Lower leg skin (tissue), 4 donors: ENCODE measurements at regions of chr2 and their contacts with region 1.

Region 1: GRCh38 chr2:130342533-130343275 is at the start of gene IMP4:
- DNase-seq: peak; percentile 99
- H3K4me3 ChIP-seq: peak within 1 kb of the TSS; percentile 78
- CTCF ChIP-seq: peak in 1 of 3 donors; percentile 16
- POLR2A ChIP-seq: no peak
- total RNA-seq, gene IMP4: 84.8 to 98.1 (median 97.0) TPM

Region 2: DNA sequence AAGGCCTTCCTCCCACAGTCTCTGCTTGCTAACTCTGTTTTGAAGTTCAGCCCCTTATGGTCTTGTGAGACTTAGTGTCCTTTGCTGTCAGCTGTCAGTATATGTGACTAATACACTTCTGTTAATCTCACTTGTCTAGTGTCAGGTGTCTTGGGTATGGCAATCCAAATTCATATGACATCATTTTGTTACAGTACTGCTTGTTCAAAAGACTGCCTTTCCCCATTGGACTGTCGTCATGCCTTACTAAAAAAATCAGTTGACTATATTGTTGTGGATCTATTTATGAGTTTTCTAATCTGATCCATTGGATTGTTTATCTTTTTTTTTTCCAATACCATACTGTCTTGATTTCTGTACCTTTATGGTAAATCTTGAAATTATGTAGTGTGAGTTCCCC is 1412.6 kb before region 1 on chr2:
- intact Hi-C with region 1: no loop called
- DNase-seq: no peak
- H3K4me3 ChIP-seq: no peak overlapping the region
- CTCF ChIP-seq: no peak
- POLR2A ChIP-seq: no peak

Region 3: DNA sequence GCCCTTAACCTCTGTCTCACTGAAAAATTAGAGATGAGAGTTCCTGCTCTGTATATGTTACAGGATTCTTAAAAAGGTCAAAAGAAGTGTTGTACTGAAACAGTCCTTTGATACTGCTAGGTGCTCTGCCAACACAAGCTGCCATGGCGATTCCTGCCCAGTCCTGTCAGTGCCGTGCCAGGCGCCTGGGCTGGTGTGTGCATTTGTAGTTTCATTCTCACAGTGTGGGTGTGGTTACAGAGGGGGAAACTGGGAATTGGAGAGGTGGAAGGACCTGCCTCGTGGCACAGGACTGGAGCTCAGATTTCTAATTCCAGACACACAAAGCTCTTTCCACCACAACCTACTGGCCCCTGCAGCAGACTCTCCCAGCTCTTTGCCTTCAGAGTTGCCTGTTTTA is 485.5 kb before region 1 on chr2:
- intact Hi-C with region 1: no loop called
- DNase-seq: no peak
- H3K4me3 ChIP-seq: no peak overlapping the region
- CTCF ChIP-seq: no peak
- POLR2A ChIP-seq: no peak

Region 4: GRCh38 chr2:130181325-130181879 is 161.3 kb before region 1 on chr2 and contains the start of gene SMPD4:
- intact Hi-C with region 1: loop called (anchors 10 kb)
- DNase-seq: peak; percentile 96 to 99
- H3K4me3 ChIP-seq: peak within 1 kb of the TSS; percentile 84
- CTCF ChIP-seq: no peak
- POLR2A ChIP-seq: no peak
- total RNA-seq, gene SMPD4: 29.7 to 44.4 (median 38.6) TPM

Region 5: DNA sequence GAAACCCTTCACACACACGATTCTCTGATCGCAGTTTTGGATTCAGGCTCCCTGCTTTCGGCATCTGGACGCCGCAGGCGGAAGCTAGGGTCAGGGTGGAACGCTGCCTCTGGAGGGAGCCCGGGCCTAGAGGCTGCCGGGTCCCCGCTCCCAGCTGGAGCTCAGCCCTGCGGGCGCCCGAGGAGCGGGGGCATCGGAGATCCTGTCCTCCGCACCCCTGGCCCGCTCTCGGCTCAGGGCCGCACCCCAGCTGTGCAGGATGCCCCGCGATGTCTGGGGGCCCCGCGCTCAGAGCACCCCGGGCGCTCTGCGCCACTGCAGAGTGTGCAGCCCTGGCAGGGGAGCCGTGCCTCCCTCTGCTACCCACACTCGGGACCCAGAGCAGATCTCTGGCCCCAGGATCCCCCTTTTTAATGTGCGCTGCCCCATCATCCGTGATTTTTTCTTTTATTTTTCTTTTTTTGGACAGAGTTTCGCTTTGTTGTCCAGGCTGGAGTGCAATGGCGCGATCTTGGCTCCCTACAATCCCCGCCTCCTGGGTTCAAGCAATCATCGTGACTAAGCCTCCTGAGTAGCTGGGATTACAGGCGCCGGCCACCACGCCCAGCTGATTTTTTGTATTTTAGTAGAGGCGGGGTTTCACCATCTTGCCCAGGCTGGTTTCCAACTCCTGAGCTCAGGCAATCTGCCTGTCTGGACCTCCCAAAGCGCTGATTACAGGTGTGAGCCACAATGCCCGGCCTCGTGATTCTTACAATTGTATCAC is 89.6 kb before region 1 on chr2:
- intact Hi-C with region 1: no loop called
- DNase-seq: peak in 1 of 2 donors; percentile 70
- H3K4me3 ChIP-seq: no peak overlapping the region
- CTCF ChIP-seq: no peak
- POLR2A ChIP-seq: no peak

Region 6: DNA sequence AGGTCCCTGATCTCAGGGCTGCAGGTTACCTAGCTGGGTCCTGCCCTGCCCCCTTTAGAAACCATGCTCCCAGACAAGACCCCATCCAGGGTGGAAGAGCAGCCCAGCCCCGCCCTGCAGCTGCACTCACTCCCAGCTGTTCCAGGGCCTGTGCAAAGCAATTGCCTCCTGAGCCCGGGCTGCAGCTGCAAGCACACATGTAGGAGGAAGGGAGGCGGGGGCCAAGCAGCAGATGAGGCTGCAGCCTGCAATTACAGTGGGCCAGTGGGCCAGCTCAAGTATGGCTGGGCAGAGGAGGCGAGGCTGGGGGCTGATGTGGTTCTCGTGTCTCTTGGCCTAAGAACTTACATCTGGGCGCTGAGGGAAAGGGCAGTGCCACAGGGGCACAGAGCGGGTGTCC is 79.1 kb before region 1 on chr2:
- intact Hi-C with region 1: no loop called
- DNase-seq: peak in 1 of 2 donors; percentile 72
- H3K4me3 ChIP-seq: no peak overlapping the region
- CTCF ChIP-seq: no peak
- POLR2A ChIP-seq: no peak

Region 7: DNA sequence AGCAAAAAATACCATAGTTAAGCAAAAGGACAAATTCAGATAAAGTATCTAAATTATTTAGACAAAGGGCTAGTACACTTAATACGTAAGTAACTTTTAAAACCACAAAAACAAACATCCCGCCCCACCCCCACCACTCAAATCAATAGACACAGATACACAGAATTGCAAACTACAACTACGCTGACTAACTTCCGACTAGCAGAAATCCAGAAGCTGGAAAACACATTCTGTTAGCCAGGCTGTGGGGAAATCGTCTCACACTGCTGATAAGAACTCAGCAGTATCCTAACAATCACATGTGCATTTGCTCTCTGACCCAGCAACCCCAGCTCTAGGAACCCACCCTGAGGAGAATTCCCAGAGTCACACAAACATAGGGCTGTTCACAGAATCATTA is 734.0 kb after region 1 on chr2:
- intact Hi-C with region 1: loop called (anchors 10 kb)
- DNase-seq: no peak
- H3K4me3 ChIP-seq: no peak overlapping the region
- CTCF ChIP-seq: no peak
- POLR2A ChIP-seq: no peak